ENCODE measurements at regions of chr16 and their contacts with region 1.

Region 1: GRCh38 chr16:78002915-78003538 is 19.3 kb upstream of the CLEC3A start:
- DNase-seq: peak; percentile 79
- H3K4me3 ChIP-seq: no peak overlapping the region
- H3K27ac ChIP-seq: no peak overlapping the region
- H3K27me3 ChIP-seq: no peaks in the 10 kb centered on the region
- CTCF ChIP-seq: peak; percentile 93

Region 2: GRCh38 chr16:77236063-77236511 is 766.9 kb before region 1 on chr16:
- CTCF ChIA-PET with region 1: interaction called, 13 read pairs
- POLR2A ChIA-PET with region 1: no interaction called
- DNase-seq: peak; percentile 65
- H3K4me3 ChIP-seq: peak overlapping the region; percentile 17; the same call in 1 of the 2 replicates
- H3K27ac ChIP-seq: no peak overlapping the region
- H3K27me3 ChIP-seq: no peaks in the 10 kb centered on the region
- CTCF ChIP-seq: peak; percentile 100

Region 3: GRCh38 chr16:77599793-77600415 is 403.1 kb before region 1 on chr16:
- CTCF ChIA-PET with region 1: interaction called, 12 read pairs
- POLR2A ChIA-PET with region 1: no interaction called
- DNase-seq: no peak
- H3K4me3 ChIP-seq: no peak overlapping the region
- H3K27ac ChIP-seq: no peak overlapping the region
- H3K27me3 ChIP-seq: no peaks in the 10 kb centered on the region
- CTCF ChIP-seq: peak; percentile 71

Region 4: GRCh38 chr16:77675464-77676324 is 327.3 kb before region 1 on chr16:
- CTCF ChIA-PET with region 1: interaction called, 92 read pairs
- POLR2A ChIA-PET with region 1: no interaction called
- DNase-seq: peak; percentile 57
- H3K4me3 ChIP-seq: no peak overlapping the region; the same call in 1 of the 2 replicates
- H3K27ac ChIP-seq: no peak overlapping the region
- H3K27me3 ChIP-seq: peaks cover 2% of the 10 kb centered on the region
- CTCF ChIP-seq: peak; percentile 93

Region 5: GRCh38 chr16:77963185-77964044 is 39.6 kb before region 1 on chr16:
- CTCF ChIA-PET with region 1: interaction called, 10 read pairs
- POLR2A ChIA-PET with region 1: no interaction called
- DNase-seq: no peak
- H3K4me3 ChIP-seq: no peak overlapping the region
- H3K27ac ChIP-seq: no peak overlapping the region
- H3K27me3 ChIP-seq: no peaks in the 10 kb centered on the region
- CTCF ChIP-seq: no peak

Region 6: DNA sequence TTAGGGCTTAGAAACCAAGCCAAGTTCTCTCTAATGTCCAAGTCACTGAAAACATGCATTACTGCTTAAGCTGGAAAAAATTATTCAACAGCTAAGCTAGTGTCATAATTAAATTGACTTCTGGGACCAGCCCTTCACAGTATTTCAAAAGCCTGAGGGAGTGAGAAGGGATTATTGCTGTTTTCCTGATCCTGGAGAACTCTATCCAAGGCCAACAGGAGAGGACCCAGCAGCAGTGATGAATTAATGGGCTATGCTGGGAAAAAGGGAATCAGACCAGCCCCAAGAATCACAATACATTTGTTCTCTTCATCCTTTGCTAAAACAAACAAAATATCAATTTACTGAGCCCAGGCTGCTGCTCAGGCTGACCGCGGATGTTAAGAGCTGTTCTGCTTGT is 15.2 kb before region 1 on chr16:
- CTCF ChIA-PET with region 1: interaction called, 46 read pairs
- POLR2A ChIA-PET with region 1: no interaction called
- DNase-seq: no peak
- H3K4me3 ChIP-seq: no peak overlapping the region
- H3K27ac ChIP-seq: no peak overlapping the region
- H3K27me3 ChIP-seq: no peaks in the 10 kb centered on the region
- CTCF ChIP-seq: no peak

Measured in AG04450 (cell line).